Activated naive CD4-positive, alpha-beta T cell treated with anti-CD3 and anti-CD28 coated beads, Interleukin-2, amount 10 ng/mL, durations not matched to agents 7 days and 5 days (primary cell): ENCODE measurements at regions of chr21 and their contacts with region 1.

Region 1: GRCh38 chr21:44801468-44802395 is at the start of gene UBE2G2:
- DNase-seq: peak; percentile 89
- H3K4me3 Mint-ChIP-seq: peak within 1 kb of the TSS; percentile 98
- H3K27ac Mint-ChIP-seq: peak within 1 kb of the TSS; percentile 94
- H3K4me1 Mint-ChIP-seq: peaks cover 41% of the 10 kb centered on the region
- H3K27me3 Mint-ChIP-seq: no peaks in the 10 kb centered on the region

Region 2: DNA sequence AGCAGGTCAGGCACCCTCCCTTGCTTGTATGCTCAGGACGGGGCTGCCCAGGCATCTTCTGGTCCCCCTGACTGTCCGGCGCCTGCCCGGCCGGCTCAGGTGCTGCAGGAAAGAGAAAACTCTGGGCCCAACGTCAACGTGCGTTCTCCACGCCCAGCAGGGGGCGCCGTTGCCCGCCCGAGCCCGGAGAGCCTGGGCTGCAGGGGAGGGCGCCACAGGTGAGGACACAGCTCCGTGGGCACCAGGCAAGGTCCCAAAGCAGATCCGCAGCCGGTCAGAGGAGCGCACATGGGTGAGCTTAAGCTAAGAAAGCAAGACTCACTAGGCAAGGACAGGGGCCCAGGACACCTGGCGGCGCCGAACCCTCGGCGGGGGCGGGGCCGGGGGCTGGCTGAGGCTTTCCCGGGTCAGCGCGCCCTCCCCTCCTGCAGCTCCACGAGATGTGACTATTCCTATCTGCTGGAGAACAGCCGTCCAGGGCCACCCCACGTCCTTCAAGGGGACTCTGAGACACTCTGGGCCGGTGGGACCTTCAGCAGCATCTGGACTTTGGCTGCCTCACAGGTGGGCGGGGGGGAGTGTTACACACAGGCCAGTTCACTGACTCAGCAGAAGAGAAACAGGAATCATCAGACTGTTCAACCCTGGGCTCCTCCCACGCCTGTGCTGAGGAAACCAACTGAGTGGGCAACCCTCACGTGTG is 291.1 kb before region 1 on chr21:
- CTCF ChIA-PET with region 1: interaction called, 17 read pairs
- DNase-seq: peak; percentile 85
- H3K4me3 Mint-ChIP-seq: peak overlapping the region; percentile 31
- H3K27ac Mint-ChIP-seq: no peak overlapping the region
- H3K4me1 Mint-ChIP-seq: peaks cover 2% of the 10 kb centered on the region
- H3K27me3 Mint-ChIP-seq: peaks cover 24% of the 10 kb centered on the region

Region 3: GRCh38 chr21:44873356-44874239 is 71.9 kb after region 1 on chr21 and contains the start of gene PTTG1IP:
- CTCF ChIA-PET with region 1: interaction called, 93 read pairs
- DNase-seq: peak; percentile 99
- H3K4me3 Mint-ChIP-seq: peak within 1 kb of the TSS; percentile 90
- H3K27ac Mint-ChIP-seq: peak within 1 kb of the TSS; percentile 97
- H3K4me1 Mint-ChIP-seq: peaks cover 61% of the 10 kb centered on the region
- H3K27me3 Mint-ChIP-seq: no peaks in the 10 kb centered on the region

Region 4: DNA sequence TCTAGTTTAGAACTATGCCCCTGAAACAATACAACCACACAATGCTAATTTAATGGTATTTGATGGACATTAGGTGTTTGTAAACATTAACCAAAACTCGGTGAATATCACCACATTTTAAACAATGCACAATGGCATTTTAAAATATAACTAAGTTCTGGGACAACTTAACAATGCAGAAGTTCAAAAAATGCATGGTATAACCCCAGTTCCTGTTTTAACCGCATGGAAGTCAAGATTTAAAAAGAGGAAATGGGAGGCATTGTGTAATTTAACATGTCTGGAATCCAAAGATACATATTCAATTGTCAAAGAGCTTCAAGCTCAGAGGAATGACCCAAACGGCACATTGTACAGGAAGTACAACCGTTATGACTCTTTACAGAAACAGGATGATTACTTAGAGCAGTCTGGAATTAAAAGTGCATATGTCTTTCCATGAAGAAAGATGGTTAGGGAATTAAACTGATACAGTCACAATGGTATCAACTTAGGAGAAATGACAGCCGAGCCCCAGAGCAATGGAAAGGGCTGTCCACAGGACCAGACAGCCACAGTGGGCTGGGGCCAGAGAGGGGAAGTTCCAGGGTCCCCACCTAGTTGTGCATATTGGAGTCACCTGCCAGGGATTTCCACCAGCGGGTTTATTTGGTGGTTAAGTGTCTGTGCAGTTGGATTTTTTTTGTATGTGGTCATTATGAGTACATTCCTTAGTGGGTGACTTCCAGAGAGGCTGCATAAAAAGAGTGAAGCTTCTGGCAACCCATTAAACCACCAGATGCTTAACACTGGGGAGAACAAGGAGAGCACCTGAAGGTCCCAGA is 79.2 kb after region 1 on chr21:
- CTCF ChIA-PET with region 1: interaction called, 93 read pairs
- DNase-seq: no peak
- H3K4me3 Mint-ChIP-seq: no peak overlapping the region
- H3K27ac Mint-ChIP-seq: peak overlapping the region; percentile 85
- H3K4me1 Mint-ChIP-seq: peaks cover 41% of the 10 kb centered on the region
- H3K27me3 Mint-ChIP-seq: no peaks in the 10 kb centered on the region

Region 5: DNA sequence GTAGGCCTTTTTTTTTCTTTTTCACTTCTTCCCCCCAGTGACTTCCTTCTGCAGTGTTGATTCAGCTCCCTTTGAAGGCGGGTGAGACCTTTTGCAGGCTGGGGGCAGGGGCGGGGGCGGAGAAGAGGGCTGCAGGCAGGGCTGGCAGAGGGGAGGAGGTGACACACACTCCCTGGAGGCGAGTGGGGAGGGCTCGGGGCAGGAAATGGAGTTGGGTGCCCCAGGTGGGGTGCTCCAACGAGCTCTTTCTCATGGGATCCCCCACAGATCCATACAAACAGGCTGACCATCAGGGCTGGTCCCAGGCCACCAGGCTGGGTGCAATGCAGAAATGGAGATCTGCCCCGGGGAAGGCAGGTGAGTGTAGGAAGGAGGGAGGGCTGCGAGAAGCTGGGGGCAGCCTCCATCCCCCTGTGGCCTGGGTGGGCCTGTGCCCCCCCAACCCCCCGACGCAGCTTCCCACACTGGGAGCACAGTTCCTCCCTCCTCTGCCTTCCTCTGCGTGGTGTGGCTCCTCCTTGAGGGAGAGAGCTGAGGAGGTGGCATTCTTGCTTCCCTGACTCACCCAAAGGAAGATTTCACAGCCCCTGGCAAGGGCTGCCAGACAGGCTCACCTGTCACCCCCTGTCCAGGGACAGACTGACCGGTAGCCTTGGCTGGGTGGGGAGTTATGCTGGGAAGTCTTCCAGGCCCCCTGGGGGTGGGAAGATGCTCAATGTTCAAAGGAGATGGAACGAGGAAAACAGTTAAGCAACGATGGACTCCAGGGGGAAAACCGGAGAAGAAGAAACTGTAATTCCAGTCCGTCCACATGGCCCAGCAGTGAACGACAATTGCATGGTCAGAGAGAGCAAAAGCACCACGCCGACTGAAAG is 126.1 kb after region 1 on chr21:
- CTCF ChIA-PET with region 1: interaction called, 58 read pairs
- DNase-seq: peak; percentile 94
- H3K4me3 Mint-ChIP-seq: peak overlapping the region; percentile 93
- H3K27ac Mint-ChIP-seq: peak overlapping the region; percentile 98
- H3K4me1 Mint-ChIP-seq: peaks cover 82% of the 10 kb centered on the region
- H3K27me3 Mint-ChIP-seq: no peaks in the 10 kb centered on the region